Keratinocyte (primary cell): ENCODE measurements at regions of chr11 and their contacts with region 1.

Region 1: DNA sequence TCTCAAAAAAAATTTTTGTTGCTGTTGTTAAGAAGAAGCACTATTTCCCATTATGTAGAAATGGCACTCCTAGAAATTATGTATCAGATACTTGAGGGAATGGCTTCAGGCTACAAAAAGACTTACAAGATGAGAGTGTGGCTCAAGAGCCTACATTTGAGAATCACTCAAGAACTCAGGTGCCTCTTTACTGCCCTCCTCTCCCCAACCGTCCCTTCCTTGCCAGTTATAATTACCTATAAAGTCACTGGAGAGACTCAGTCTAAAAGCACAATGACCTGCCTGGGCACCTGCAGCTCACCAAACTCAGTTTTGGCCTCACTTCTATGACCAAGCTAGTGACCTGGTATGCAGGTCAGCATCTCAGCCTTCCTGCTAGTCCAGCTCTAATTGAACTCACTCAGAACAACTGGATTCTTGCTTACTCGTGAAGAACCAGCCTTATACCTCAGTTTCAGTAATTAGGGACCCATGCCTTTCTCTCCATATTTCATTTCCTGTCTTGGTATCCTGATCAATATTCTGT is 41.9 kb upstream of the PPP2R1B start:
- DNase-seq: no peak
- H3K4me3 ChIP-seq: no peak overlapping the region
- H3K27ac ChIP-seq: no peak overlapping the region
- H3K4me1 ChIP-seq: no peaks in the 10 kb centered on the region
- H3K27me3 ChIP-seq: no peaks in the 10 kb centered on the region
- CTCF ChIP-seq: no peak

Region 2: GRCh38 chr11:111759376-111759775 is 48.8 kb before region 1 on chr11:
- dilution Hi-C with region 1: loop called (anchors 5 kb)
- DNase-seq: no peak
- H3K4me3 ChIP-seq: no peak overlapping the region
- H3K27ac ChIP-seq: no peak overlapping the region
- H3K4me1 ChIP-seq: peaks cover under 1% of the 10 kb centered on the region
- H3K27me3 ChIP-seq: no peaks in the 10 kb centered on the region
- CTCF ChIP-seq: no peak

Region 3: GRCh38 chr11:111975076-111975806 is 167.1 kb after region 1 on chr11:
- dilution Hi-C with region 1: no loop called
- DNase-seq: no peak
- H3K4me3 ChIP-seq: no peak overlapping the region
- H3K27ac ChIP-seq: no peak overlapping the region
- H3K4me1 ChIP-seq: peaks cover 29% of the 10 kb centered on the region
- H3K27me3 ChIP-seq: no peaks in the 10 kb centered on the region
- CTCF ChIP-seq: peak; percentile 8 to 43 (median 24)

Region 4: DNA sequence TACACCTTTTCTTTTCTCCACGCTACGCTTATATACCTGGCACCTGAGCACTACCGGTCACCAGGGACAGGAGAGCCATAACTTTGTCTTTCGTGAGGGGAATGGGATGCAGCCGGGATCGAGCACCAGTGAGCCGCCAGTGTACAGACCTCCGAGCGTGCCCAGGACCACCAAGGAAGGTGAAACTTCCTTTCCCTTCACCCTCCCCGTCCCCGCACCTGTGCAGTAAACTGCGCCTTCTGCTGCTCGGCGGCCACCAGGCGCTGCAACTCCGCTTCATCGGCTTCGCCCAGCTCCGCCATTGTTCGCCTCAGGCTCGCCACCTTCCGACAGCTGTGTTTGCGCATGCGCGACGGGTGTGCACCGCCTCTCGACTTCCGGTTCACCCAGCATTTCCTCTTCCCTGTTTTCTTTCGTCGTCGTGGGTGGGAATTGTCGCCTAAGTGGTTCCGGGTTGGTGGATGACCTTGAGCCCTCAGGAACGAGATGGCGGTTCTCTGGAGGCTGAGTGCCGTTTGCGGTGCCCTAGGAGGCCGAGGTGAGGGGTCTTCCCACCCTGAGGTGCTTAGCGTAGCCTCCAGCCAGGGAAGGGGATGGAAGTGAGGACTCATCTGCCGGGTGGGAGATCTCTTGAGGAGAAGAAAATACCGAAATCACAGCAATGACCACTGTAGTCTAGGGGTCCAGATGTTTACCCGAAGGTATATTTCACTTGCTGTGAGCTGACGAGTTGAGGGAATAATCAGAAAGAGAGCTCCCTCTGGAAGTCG is 278.5 kb after region 1 on chr11 and contains the starts of genes SDHD and TIMM8B:
- dilution Hi-C with region 1: no loop called
- DNase-seq: peak; percentile 75
- H3K4me3 ChIP-seq: peak within 1 kb of the TSS; percentile 68 to 100 (median 76)
- H3K27ac ChIP-seq: peak within 1 kb of the TSS; percentile 95
- H3K4me1 ChIP-seq: peaks cover 14% of the 10 kb centered on the region
- H3K27me3 ChIP-seq: no peaks in the 10 kb centered on the region
- CTCF ChIP-seq: peak; percentile 23 to 58 (median 28)
- polyA plus RNA-seq, gene SDHD: 101 to 126 TPM (median 121 TPM) in 3 replicates
- polyA plus RNA-seq, gene TIMM8B: 91.7 to 151 TPM (median 126 TPM) in 3 replicates